Activated CD4-positive, alpha-beta T cell treated with anti-CD3 and anti-CD28 coated beads, Interleukin-2, amount 10 ng/mL, durations not matched to agents 24 days and 14 days (primary cell): ENCODE measurements at regions of chr1 and their contacts with region 1.

Region 1: GRCh38 chr1:173195596-173196088 is 11.5 kb downstream of the TNFSF4 start:
- DNase-seq: peak; percentile 65
- H3K4me3 Mint-ChIP-seq: no peak overlapping the region
- H3K27ac Mint-ChIP-seq: no peak overlapping the region
- H3K4me1 Mint-ChIP-seq: peaks cover 13% of the 10 kb centered on the region
- H3K27me3 Mint-ChIP-seq: peaks cover 21% of the 10 kb centered on the region

Region 2: GRCh38 chr1:172826096-172826743 is 369.4 kb before region 1 on chr1:
- intact Hi-C with region 1: loop called (anchors 5 kb)
- DNase-seq: no peak
- H3K4me3 Mint-ChIP-seq: no peak overlapping the region
- H3K27ac Mint-ChIP-seq: no peak overlapping the region
- H3K4me1 Mint-ChIP-seq: peaks cover 4% of the 10 kb centered on the region
- H3K27me3 Mint-ChIP-seq: peaks cover 28% of the 10 kb centered on the region